Activated naive CD4-positive, alpha-beta T cell treated with anti-CD3 and anti-CD28 coated beads for 36 hours (primary cell): ENCODE measurements at regions of chr5 and their contacts with region 1.

Region 1: GRCh38 chr5:112707187-112708102 is 30.2 kb upstream of the APC start:
- DNase-seq: peak; percentile 98
- H3K4me3 Mint-ChIP-seq: peak overlapping the region; percentile 91
- H3K27ac Mint-ChIP-seq: peak overlapping the region; percentile 89
- H3K4me1 Mint-ChIP-seq: peaks cover 48% of the 10 kb centered on the region
- H3K27me3 Mint-ChIP-seq: no peaks in the 10 kb centered on the region

Region 2: DNA sequence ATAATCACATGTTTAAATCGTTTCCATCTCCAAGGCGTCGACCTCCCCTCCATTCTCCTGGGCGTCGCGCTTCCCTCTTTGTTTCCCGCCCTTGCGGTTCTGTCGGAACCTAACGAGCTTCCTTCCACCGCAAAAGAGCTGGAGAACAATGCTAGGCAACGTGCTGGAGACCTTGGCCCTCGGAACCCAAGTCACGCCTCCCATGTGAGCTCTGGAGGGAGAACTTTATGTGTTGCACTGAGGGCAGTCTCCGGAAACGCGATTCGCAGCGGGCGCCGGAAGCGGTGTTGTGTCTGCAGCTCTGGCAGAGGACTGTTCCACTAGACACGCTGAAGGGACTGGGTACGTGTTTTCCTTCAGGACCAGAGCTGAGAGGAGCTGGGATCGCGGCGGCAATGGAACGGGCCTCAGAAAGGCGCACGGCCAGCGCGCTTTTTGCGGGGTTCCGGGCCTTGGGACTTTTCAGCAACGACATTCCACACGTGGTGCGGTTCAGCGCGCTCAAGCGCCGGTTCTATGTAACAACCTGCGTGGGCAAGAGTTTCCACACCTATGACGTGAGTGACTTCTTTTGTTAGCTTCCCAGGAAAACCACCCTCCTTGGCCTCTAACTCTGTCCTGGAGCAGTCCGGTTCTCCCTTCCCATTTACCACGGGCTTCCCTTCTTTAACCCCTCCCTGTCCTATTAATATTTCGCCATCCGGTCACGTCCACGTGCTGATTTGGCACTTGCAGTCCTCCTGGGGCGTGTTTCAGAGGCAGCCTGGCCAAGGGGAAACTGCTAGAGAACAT is 1615.2 kb before region 1 on chr5 and contains the start of gene WDR36:
- CTCF ChIA-PET with region 1: no interaction called
- intact Hi-C with region 1: loop called (anchors 1 kb)
- DNase-seq: peak; percentile 92
- H3K4me3 Mint-ChIP-seq: peak within 1 kb of the TSS; percentile 99
- H3K27ac Mint-ChIP-seq: peak within 1 kb of the TSS; percentile 90
- H3K4me1 Mint-ChIP-seq: peaks cover 42% of the 10 kb centered on the region
- H3K27me3 Mint-ChIP-seq: peaks cover 8% of the 10 kb centered on the region
- total RNA-seq, gene WDR36: 34.1 to 40.3 TPM

Region 3: GRCh38 chr5:112160652-112161391 is 546.6 kb before region 1 on chr5:
- CTCF ChIA-PET with region 1: no interaction called
- intact Hi-C with region 1: loop called (anchors 1 kb)
- DNase-seq: peak; percentile 94
- H3K4me3 Mint-ChIP-seq: peak overlapping the region; percentile 86
- H3K27ac Mint-ChIP-seq: peak overlapping the region; percentile 70
- H3K4me1 Mint-ChIP-seq: peaks cover 43% of the 10 kb centered on the region
- H3K27me3 Mint-ChIP-seq: no peaks in the 10 kb centered on the region

Region 4: GRCh38 chr5:112757468-112758208 is 50.2 kb after region 1 on chr5:
- CTCF ChIA-PET with region 1: interaction called, 5 read pairs
- intact Hi-C with region 1: loop called (anchors 1 kb)
- DNase-seq: no peak
- H3K4me3 Mint-ChIP-seq: no peak overlapping the region
- H3K27ac Mint-ChIP-seq: no peak overlapping the region
- H3K4me1 Mint-ChIP-seq: peaks cover 2% of the 10 kb centered on the region
- H3K27me3 Mint-ChIP-seq: no peaks in the 10 kb centered on the region

Region 5: GRCh38 chr5:112878760-112879159 is 171.3 kb after region 1 on chr5:
- CTCF ChIA-PET with region 1: no interaction called
- intact Hi-C with region 1: loop called (anchors 5 kb)
- DNase-seq: peak; percentile 80
- H3K4me3 Mint-ChIP-seq: no peak overlapping the region
- H3K27ac Mint-ChIP-seq: peak overlapping the region; percentile 71
- H3K4me1 Mint-ChIP-seq: peaks cover 27% of the 10 kb centered on the region
- H3K27me3 Mint-ChIP-seq: no peaks in the 10 kb centered on the region

Region 6: DNA sequence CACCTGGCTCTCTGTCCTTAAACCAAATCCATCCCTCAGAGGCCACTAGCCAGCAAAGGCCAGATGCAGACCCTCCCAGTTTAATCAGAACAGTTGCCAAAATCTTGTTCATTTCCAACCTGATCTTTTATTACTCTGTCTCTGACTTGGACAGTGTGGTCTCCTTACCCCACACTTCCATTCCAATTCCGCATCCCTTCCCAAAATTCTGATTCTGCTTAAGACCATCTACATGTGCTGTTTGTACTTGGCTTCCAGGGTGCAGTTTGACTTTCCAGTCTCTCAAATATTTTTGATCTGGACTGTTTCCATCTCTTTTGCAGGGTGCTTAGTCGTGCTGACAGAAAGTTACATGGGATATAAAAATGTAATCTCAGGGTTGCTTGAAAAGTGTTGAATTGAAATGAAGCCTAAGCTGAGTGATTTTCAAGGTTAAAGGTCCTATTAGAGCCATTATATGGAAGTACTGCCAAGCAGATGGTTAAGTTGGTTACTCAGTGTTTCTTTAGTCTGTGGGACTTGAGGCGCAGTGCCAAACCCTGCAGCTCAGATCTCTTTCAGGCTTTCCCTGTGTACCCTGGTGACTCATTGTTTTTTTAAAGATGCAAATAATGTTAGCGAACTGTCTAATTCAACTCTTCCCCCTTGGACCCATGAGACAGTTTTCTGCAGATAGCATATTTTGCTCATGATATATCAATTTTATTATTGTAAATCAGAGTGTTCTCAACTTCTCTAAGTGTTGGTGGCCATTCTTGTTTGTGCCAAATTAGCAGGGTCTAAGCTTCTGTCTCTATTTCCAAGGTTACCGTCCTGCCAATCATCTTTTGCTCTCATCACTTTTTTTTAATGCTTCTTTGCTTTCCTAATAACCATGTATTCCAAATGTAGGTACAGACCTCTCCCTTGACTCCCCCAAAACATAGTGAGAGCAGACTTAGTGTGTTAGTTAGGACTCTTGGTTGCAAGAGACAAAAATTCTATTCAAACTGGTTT is 250.9 kb after region 1 on chr5:
- CTCF ChIA-PET with region 1: no interaction called
- intact Hi-C with region 1: loop called (anchors 5 kb)
- DNase-seq: peak; percentile 47
- H3K4me3 Mint-ChIP-seq: no peak overlapping the region
- H3K27ac Mint-ChIP-seq: no peak overlapping the region
- H3K4me1 Mint-ChIP-seq: peaks cover 20% of the 10 kb centered on the region
- H3K27me3 Mint-ChIP-seq: no peaks in the 10 kb centered on the region

Region 7: DNA sequence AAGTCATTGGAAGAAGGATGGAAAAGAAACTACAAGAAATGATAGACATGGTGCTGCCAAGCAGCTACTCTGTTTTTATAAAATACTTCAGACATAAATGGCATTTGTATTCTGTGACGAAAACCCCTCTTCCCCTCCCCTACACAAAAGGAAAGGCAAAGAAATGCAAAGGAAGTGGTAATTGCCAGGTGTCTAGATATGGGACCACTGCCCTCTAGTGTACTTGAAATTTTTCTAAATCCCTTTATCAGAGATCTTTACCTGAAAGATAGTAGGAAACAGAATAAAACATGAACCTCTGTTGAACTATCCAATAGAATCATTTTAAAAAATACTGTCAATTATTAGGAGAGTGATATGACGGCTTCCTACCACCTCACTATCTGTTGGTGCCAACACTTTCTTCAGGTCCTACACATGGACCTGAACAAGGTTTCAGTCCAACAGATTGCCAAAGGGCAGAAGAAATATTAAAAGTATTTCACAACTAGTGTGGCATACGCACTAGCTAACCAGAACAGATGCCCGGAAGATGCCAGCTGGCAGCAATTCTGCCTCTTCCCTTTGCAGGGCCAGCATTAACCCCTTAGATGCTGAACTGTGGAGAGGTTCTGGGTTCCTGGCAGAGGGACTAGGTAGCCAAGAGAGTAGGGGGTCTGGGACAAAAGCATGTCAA is 623.2 kb after region 1 on chr5:
- CTCF ChIA-PET with region 1: no interaction called
- intact Hi-C with region 1: loop called (anchors 10 kb)
- DNase-seq: peak; percentile 14
- H3K4me3 Mint-ChIP-seq: no peak overlapping the region
- H3K27ac Mint-ChIP-seq: no peak overlapping the region
- H3K4me1 Mint-ChIP-seq: peaks cover 16% of the 10 kb centered on the region
- H3K27me3 Mint-ChIP-seq: no peaks in the 10 kb centered on the region